A673 (cell line): ENCODE measurements at regions of chr3 and their contacts with region 1.

Region 1: GRCh38 chr3:182909318-182910040 is 70.9 kb downstream of the DCUN1D1 start:
- DNase-seq: peak; percentile 32
- H3K4me3 ChIP-seq: no peak overlapping the region
- H3K27ac ChIP-seq: no peak overlapping the region
- H3K4me1 ChIP-seq: no peaks in the 10 kb centered on the region
- H3K27me3 ChIP-seq: no peaks in the 10 kb centered on the region
- CTCF ChIP-seq: peak; percentile 61

Region 2: DNA sequence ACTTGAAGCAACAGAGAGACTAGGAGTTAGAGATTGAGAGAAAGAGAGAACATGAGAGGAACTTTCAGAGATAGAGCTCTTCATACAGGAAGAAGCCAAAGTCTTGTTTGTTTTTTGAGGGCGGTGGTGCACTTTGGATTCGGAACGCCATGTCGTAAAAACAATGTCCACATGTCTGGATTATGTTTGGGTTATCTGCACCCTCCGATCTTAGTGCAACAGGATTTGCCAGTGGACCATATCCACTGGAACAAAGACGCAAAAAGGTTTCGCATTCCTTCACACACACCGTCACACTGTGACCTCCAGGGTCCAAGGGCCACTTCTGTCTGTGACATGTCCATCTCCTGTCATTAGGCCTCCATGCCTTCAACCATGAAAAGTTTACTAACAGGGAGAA is 258.0 kb before region 1 on chr3:
- CTCF ChIA-PET with region 1: no interaction called
- POLR2A ChIA-PET with region 1: no interaction called
- intact Hi-C with region 1: no loop called
- DNase-seq: no peak
- H3K4me3 ChIP-seq: no peak overlapping the region
- H3K27ac ChIP-seq: no peak overlapping the region
- H3K4me1 ChIP-seq: no peaks in the 10 kb centered on the region
- H3K27me3 ChIP-seq: no peaks in the 10 kb centered on the region
- CTCF ChIP-seq: no peak

Region 3: GRCh38 chr3:183116025-183116614 is 206.6 kb after region 1 on chr3:
- CTCF ChIA-PET with region 1: no interaction called
- POLR2A ChIA-PET with region 1: no interaction called
- intact Hi-C with region 1: loop called (anchors 5 kb)
- DNase-seq: peak; percentile 69
- H3K4me3 ChIP-seq: peak overlapping the region; percentile 44
- H3K27ac ChIP-seq: no peak overlapping the region
- H3K4me1 ChIP-seq: no peaks in the 10 kb centered on the region
- H3K27me3 ChIP-seq: peaks cover 11% of the 10 kb centered on the region
- CTCF ChIP-seq: no peak

Region 4: DNA sequence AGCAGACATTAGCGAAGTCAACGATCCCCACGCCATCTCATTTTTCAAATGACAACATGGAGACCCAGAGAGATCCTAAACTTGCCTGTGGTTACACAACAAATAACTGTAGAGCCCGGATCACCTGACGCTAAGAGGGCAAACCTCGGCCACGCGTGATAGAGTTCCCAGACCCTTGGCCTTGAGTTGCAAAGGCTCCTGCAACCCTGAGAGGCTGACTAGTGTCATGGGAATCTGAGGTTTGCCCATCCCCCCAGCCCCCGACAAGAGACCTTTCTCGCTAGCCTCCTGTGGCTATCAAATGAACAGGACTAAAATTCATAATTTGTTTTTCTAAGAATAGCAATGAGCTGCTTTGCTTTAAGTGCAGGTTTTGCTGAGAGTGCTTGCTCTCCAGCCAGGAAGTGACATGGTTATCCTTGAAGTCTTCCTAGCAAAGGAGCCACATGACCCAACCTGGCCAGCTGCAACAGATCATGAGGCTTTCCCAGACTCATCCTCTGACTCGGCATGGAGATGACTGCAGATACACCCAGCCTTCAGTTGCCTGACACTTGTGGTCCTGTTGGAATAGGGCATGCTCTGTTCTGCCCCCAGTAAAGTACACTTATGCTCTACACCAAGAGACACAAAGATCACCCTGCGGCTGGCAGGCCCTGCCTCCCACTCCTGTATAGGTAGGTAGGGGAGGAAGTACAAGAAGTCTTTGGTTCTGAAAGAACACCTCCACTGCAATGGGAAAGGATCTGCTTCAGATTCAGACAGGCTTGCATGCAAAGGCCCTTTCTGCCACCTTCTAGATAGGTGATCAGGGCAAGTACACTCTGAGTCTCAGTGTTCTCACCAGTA is 482.9 kb after region 1 on chr3:
- CTCF ChIA-PET with region 1: no interaction called
- POLR2A ChIA-PET with region 1: no interaction called
- intact Hi-C with region 1: loop called (anchors 10 kb)
- DNase-seq: no peak
- H3K4me3 ChIP-seq: no peak overlapping the region
- H3K27ac ChIP-seq: no peak overlapping the region
- H3K4me1 ChIP-seq: no peaks in the 10 kb centered on the region
- H3K27me3 ChIP-seq: no peaks in the 10 kb centered on the region
- CTCF ChIP-seq: no peak